Activated CD8-positive, alpha-beta memory T cell treated with anti-CD3 and anti-CD28 coated beads, Interleukin-2, amount 10 ng/mL, durations not matched to agents 7 days and 5 days (primary cell): ENCODE measurements at regions of chr6 and their contacts with region 1.

Region 1: DNA sequence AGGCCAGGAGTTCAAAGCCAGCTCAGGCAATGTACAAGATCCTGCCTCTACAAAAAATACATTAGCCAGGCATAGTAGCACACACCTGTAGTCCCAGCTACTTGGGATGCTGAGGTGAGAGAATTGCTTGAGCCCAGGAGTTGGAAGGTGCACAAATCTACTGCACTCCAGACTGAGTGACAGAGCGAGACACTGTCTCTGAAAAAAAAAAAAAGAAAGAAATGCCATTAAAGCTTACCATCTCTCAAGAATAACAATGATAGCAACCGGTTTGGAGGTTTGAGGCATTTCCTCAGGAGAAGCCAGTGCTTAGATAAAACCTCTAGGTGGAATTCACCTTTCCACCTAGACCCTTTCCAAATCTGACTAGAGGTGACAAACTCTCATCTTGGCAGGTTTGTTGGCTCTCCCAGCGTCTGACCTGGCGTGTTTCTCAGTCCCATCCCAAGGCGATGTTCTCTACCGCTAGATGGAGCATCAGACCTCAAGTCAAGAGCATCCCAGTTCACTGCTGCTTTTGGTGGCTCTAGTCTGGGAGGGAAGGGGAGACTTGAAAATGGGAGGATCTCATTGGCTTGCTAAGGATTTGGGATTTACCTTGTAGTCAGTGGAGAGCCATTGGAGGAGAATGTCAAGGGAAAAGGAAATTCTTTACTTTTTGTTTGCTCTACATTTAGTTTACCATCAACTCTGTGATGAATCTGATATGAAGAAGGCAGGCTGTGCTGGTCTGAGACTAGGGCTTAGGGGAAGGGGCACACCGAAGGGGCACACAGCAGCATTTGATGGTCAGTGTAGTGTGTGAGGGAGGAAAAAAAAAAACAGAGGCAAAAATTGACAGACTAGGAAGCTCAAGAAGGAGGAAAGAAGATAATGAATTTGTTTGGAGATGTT is 67.9 kb downstream of the NCOA7 start:
- DNase-seq: peak; percentile 55
- ATAC-seq: peak; percentile 72
- H3K4me3 Mint-ChIP-seq: no peak overlapping the region
- H3K27ac Mint-ChIP-seq: no peak overlapping the region
- H3K4me1 Mint-ChIP-seq: peaks cover 6% of the 10 kb centered on the region
- H3K27me3 Mint-ChIP-seq: no peaks in the 10 kb centered on the region

Region 2: GRCh38 chr6:125688138-125688537 is 170.5 kb before region 1 on chr6:
- CTCF ChIA-PET with region 1: no interaction called
- DNase-seq: no peak
- ATAC-seq: no peak
- H3K4me3 Mint-ChIP-seq: no peak overlapping the region
- H3K27ac Mint-ChIP-seq: no peak overlapping the region
- H3K4me1 Mint-ChIP-seq: no peaks in the 10 kb centered on the region
- H3K27me3 Mint-ChIP-seq: peaks cover 52% of the 10 kb centered on the region

Region 3: DNA sequence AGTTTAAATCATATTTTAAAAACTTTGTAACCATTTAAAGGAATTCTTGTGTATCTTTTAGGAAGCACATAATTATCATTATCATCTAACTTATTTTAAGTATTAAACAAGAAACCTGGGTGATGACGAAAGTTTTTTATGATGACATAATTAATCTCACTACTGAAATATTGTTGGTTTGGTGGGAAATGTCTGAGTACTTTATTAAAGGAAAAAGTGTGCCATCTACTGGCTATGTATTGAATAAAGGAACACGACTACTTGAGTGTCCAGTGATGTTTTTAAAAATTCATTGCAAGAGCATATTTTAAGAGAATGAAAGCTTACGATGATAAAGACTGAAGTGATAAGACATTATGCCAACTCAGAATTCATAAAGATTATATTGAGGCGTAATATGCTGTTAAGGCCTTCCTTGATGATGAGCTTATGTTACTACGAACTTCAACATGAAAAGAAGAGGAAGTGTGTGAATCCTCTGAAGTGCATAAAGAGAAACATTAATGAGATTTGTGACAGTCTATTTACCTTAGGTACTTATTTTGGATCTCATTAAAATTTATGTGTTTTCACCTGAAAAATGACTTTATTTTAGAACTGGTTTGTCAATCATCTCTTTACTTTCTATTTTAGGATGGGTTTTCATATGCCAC is 115.7 kb after region 1 on chr6:
- CTCF ChIA-PET with region 1: interaction called, 10 read pairs
- DNase-seq: no peak
- ATAC-seq: peak; percentile 69
- H3K4me3 Mint-ChIP-seq: no peak overlapping the region
- H3K27ac Mint-ChIP-seq: peak overlapping the region; percentile 8
- H3K4me1 Mint-ChIP-seq: peaks cover 5% of the 10 kb centered on the region
- H3K27me3 Mint-ChIP-seq: no peaks in the 10 kb centered on the region

Region 4: DNA sequence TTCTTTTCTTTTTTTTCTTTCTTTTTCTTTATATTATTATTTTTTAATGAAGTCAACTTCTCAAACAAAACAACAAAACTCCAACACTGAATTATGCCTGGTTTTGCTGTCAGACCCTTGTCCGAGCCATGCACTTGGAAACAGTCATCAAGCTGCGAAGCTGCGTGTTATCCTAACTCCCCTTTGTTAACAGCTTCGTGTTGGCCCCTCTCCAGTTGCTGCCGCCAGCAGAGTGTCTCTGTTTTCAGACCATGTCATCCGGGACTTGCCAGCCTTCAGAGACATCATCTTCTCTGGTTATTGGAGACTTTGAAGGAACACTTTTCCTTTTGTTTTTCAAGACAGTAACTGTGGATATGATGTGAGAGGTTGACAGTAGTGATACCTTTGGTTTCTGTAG is 210.8 kb after region 1 on chr6:
- CTCF ChIA-PET with region 1: no interaction called
- DNase-seq: no peak
- ATAC-seq: no peak
- H3K4me3 Mint-ChIP-seq: no peak overlapping the region
- H3K27ac Mint-ChIP-seq: no peak overlapping the region
- H3K4me1 Mint-ChIP-seq: no peaks in the 10 kb centered on the region
- H3K27me3 Mint-ChIP-seq: no peaks in the 10 kb centered on the region